Adrenal gland (tissue), 19 donors: ENCODE measurements at regions of chr12 and their contacts with region 1.

Region 1: GRCh38 chr12:12916135-12916944 is 25.0 kb downstream of the GPRC5A start:
- DNase-seq: peak; percentile 77 to 96 (median 87)
- H3K4me3 ChIP-seq: no peak overlapping the region
- H3K27ac ChIP-seq: peak overlapping the region in 2 of 5 donors; percentile 44 to 73
- H3K4me1 ChIP-seq: peaks cover 4 to 5% of the 10 kb centered on the region in 2 donors
- H3K27me3 ChIP-seq: no peaks in the 10 kb centered on the region
- CTCF ChIP-seq: peak; percentile 95 to 98 (median 96)
- POLR2A ChIP-seq: no peak

Region 2: GRCh38 chr12:12975322-12976077 is 59.2 kb after region 1 on chr12:
- intact Hi-C with region 1: loop called (anchors 5 kb)
- DNase-seq: peak in 4 of 7 donors; percentile 24 to 37 (median 28)
- H3K4me3 ChIP-seq: no peak overlapping the region
- H3K27ac ChIP-seq: peak overlapping the region in 3 of 5 donors; percentile 53 to 67 (median 59)
- H3K4me1 ChIP-seq: peaks cover 0 to 9% of the 10 kb centered on the region in 2 donors
- H3K27me3 ChIP-seq: no peaks in the 10 kb centered on the region
- CTCF ChIP-seq: peak in 1 of 6 experiments; percentile 19
- POLR2A ChIP-seq: no peak

Region 3: DNA sequence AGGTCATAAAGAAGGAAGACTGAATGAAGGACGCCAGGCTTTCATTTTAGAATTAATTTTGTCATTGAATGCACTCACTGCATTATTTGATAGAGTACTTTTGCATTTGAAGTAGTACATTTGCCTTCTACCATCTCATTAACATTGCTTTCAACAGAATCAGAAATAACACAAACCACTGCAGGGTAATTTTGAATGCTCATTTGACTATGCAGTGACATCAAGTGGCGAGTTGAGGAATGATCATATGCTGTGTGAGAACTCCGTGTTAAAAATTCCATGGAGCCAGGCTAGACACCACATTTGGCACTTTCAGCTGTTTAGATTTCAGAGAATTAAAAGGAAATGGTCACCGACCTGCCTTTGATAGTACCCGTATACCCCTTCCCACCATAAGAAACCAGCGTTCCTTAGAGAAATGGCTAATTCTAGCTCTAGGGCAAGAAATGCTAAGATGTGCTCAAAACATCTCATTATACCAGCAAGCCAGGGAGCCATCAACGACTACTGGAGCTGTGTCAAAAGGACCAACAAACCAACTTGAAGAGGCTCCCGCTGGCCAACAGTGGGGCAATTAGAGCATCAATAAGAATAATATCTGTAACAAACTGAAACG is 67.2 kb after region 1 on chr12:
- intact Hi-C with region 1: loop called (anchors 5 kb)
- DNase-seq: peak in 4 of 7 donors; percentile 26 to 47 (median 37)
- H3K4me3 ChIP-seq: no peak overlapping the region
- H3K27ac ChIP-seq: no peak overlapping the region
- H3K4me1 ChIP-seq: no peaks in the 10 kb centered on the region
- H3K27me3 ChIP-seq: no peaks in the 10 kb centered on the region
- CTCF ChIP-seq: peak; percentile 25 to 64 (median 56)
- POLR2A ChIP-seq: no peak

Region 4: DNA sequence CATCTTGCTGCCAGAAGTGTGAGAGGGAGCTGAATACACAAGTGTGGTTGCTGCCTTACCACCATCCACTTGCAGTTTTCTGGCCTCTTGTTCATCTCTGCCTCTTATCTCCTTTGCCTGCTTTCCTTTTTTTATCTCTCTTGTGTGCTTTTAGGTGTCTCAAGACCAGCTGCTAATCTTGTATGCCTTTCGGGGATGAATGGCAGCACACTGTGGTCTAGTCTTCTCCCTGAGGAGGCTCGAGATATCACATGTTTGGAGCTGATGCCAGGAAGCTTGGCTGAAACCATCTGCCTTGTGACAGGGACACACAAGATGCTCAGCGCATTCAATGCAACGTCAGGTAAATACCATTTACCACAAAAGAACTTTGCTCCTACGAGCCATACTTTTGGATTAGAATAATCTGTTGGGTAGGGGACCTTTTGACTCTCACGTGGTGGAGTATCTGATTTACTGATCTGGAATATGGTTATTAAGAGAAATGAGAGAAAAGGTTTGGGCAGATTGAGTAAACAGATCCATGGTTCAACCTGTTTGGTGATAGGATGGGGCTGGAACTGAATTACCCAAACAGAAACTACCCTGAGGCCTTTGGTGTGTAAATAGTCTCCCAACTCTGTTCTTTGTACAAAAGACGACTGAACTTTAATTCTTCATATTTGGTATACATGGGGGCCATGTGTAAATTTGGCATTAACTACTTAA is 145.2 kb after region 1 on chr12:
- intact Hi-C with region 1: no loop called
- DNase-seq: no peak
- H3K4me3 ChIP-seq: no peak overlapping the region
- H3K27ac ChIP-seq: no peak overlapping the region
- H3K4me1 ChIP-seq: no peaks in the 10 kb centered on the region
- H3K27me3 ChIP-seq: no peaks in the 10 kb centered on the region
- CTCF ChIP-seq: no peak
- POLR2A ChIP-seq: no peak

Region 5: DNA sequence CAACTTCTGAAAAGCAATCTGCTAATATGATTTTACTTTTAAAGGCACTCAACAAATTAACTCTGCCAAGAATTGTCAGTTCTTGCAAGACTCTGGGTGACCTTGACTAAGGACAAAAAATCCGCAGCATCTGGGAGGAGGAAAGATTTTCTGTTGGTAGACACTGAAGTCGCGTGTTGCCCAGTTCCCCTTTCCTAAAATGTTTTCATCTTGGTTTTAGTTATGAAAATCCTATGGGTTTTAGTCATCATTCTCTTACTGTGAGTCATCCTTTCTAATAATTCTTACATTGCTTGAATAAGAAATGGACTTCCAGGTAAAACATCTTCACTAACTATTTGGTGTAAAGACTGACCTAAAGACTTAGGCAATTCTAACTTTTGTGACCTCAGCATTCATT is 178.0 kb after region 1 on chr12:
- intact Hi-C with region 1: loop called (anchors 10 kb)
- DNase-seq: peak in 1 of 7 donors; percentile 20
- H3K4me3 ChIP-seq: no peak overlapping the region
- H3K27ac ChIP-seq: no peak overlapping the region
- H3K4me1 ChIP-seq: peaks cover 9 to 26% of the 10 kb centered on the region in 2 donors
- H3K27me3 ChIP-seq: peaks cover 5% of the 10 kb centered on the region
- CTCF ChIP-seq: no peak
- POLR2A ChIP-seq: no peak

Region 6: GRCh38 chr12:13211859-13212664 is 295.7 kb after region 1 on chr12:
- intact Hi-C with region 1: loop called (anchors 2 to 5 kb)
- DNase-seq: peak; percentile 60 to 89 (median 71)
- H3K4me3 ChIP-seq: no peak overlapping the region
- H3K27ac ChIP-seq: no peak overlapping the region
- H3K4me1 ChIP-seq: peaks cover 0 to 39% of the 10 kb centered on the region in 2 donors
- H3K27me3 ChIP-seq: no peaks in the 10 kb centered on the region
- CTCF ChIP-seq: peak; percentile 70 to 87 (median 77)
- POLR2A ChIP-seq: no peak